Activated T-helper 2 cell treated with anti-CD3 and anti-CD28 coated beads, Interferon-gamma antibody, Interleukin-2, Interleukin-4, amounts not matched to agents 10 μg/mL and 5 μg/mL and 100 μg/mL, durations not matched to agents 14 hours and 24 hours and 36 hours (primary cell): ENCODE measurements at regions of chr22 and their contacts with region 1.

Region 1: GRCh38 chr22:41800348-41801146 is at the start of gene CCDC134:
- DNase-seq: peak; percentile 90
- H3K4me3 Mint-ChIP-seq: peak within 1 kb of the TSS; percentile 93
- H3K27ac Mint-ChIP-seq: peak within 1 kb of the TSS; percentile 97
- H3K4me1 Mint-ChIP-seq: peaks cover 33% of the 10 kb centered on the region
- H3K27me3 Mint-ChIP-seq: no peaks in the 10 kb centered on the region
- total RNA-seq, gene CCDC134: 17.4 and 19.6 TPM in 2 replicates

Region 2: GRCh38 chr22:41226723-41227655 is 573.6 kb before region 1 on chr22:
- intact Hi-C with region 1: no loop called
- DNase-seq: no peak
- H3K4me3 Mint-ChIP-seq: no peak overlapping the region
- H3K27ac Mint-ChIP-seq: no peak overlapping the region
- H3K4me1 Mint-ChIP-seq: no peaks in the 10 kb centered on the region
- H3K27me3 Mint-ChIP-seq: no peaks in the 10 kb centered on the region

Region 3: DNA sequence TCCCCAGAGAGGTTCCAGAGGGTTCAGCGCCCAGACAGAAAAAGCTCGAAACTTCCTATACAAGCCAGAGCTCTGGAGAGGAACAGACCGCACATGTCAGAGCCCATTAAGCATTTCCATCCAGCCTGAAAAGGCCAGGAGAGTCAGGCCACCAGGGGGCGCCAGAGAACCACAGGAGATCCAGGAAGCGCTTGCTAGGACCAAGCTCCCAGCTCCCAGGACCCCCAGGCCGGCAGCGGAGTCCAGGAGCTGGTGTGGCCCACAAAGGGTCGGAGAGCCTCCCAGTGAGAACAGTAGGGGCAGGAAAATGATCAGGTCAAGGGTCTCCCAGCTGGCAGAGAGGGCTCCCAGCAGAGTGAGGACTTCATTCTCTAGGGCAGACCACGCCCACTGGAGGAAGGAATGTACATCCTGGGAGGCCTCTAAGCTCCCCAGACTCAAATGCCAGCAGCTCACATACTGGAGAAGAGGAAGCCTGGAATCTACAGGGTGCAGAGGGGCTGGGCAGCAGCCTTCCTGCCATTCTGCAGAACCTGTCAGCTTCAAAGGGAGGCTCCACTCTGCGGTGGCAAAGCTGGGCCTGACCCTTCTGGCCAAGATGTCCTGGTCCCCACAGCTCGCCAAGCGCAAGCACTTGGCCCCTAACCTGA is 103.3 kb before region 1 on chr22:
- intact Hi-C with region 1: loop called (anchors 5 kb)
- DNase-seq: peak; percentile 81
- H3K4me3 Mint-ChIP-seq: no peak overlapping the region
- H3K27ac Mint-ChIP-seq: peak overlapping the region; percentile 69
- H3K4me1 Mint-ChIP-seq: peaks cover 11% of the 10 kb centered on the region
- H3K27me3 Mint-ChIP-seq: peaks cover 2% of the 10 kb centered on the region

Region 4: GRCh38 chr22:41746567-41747400 is 53.8 kb before region 1 on chr22:
- intact Hi-C with region 1: loop called (anchors 5 kb)
- DNase-seq: peak; percentile 36
- H3K4me3 Mint-ChIP-seq: no peak overlapping the region
- H3K27ac Mint-ChIP-seq: no peak overlapping the region
- H3K4me1 Mint-ChIP-seq: peaks cover 6% of the 10 kb centered on the region
- H3K27me3 Mint-ChIP-seq: peaks cover 31% of the 10 kb centered on the region

Region 5: GRCh38 chr22:41780746-41781505 is 19.6 kb before region 1 on chr22:
- intact Hi-C with region 1: loop called (anchors 1 kb)
- DNase-seq: peak; percentile 94
- H3K4me3 Mint-ChIP-seq: peak overlapping the region; percentile 89
- H3K27ac Mint-ChIP-seq: peak overlapping the region; percentile 96
- H3K4me1 Mint-ChIP-seq: peaks cover 31% of the 10 kb centered on the region
- H3K27me3 Mint-ChIP-seq: no peaks in the 10 kb centered on the region

Region 6: GRCh38 chr22:41822317-41823060 is 21.9 kb after region 1 on chr22:
- intact Hi-C with region 1: loop called (anchors 2 kb)
- DNase-seq: no peak
- H3K4me3 Mint-ChIP-seq: no peak overlapping the region
- H3K27ac Mint-ChIP-seq: peak overlapping the region; percentile 79
- H3K4me1 Mint-ChIP-seq: peaks cover 23% of the 10 kb centered on the region
- H3K27me3 Mint-ChIP-seq: no peaks in the 10 kb centered on the region

Region 7: GRCh38 chr22:41966607-41967240 is 166.2 kb after region 1 on chr22:
- intact Hi-C with region 1: no loop called
- DNase-seq: peak; percentile 33
- H3K4me3 Mint-ChIP-seq: no peak overlapping the region
- H3K27ac Mint-ChIP-seq: no peak overlapping the region
- H3K4me1 Mint-ChIP-seq: peaks cover 6% of the 10 kb centered on the region
- H3K27me3 Mint-ChIP-seq: peaks cover 3% of the 10 kb centered on the region